ENCODE measurements at regions of chr16 and their contacts with region 1.

Region 1: DNA sequence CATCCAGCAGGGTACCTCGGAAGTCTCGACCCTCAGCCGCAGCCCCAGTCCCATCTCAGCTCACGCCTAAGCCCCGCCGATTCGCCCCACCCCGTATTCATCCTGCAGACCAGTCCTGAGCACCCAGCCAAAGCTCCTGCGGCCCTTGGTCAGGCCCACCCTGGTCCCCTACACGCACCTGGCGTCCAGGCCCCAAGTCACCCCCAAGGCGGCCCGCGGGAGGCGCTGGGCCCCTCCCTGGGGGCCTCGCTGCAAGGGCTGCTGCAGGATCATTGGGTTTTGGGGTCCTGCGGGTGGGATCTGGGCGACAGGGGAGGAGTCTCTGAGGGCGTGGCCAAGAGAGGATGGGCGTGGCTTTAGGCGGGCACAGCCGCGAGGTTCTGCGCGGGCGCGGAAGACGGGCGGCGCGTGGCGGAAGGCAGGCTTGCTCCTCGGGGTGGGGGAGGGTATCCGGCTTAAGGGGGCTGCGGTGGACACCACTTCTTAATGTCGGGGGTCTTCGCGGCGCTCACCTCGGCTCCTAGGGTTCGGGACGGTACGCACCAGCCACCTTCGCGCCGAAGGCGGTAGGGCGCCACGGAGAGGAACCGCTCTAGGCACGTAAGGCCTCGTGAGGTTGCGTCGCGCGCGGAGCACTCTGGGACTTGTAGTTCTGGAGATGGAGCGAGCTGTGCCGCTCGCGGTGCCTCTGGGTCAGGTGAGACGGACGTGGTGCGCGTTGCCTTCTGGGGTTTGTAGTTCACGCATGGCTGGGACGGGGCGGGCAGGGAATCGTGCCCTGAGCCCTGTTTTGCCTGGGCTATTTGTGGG is at the starts of genes HCFC1R1 and THOC6:
- DNase-seq: peak; percentile 91
- H3K4me3 ChIP-seq: peak within 1 kb of the TSS; percentile 94
- H3K27ac ChIP-seq: peak within 1 kb of the TSS; percentile 99
- H3K27me3 ChIP-seq: peaks cover 2% of the 10 kb centered on the region
- CTCF ChIP-seq: no peak
- polyA plus RNA-seq, gene HCFC1R1: 51.6 and 73.4 TPM in 2 replicates
- polyA plus RNA-seq, gene THOC6: 14.5 and 16.7 TPM in 2 replicates

Region 2: GRCh38 chr16:3046506-3047386 is 22.9 kb after region 1 on chr16 and contains the start of gene MMP25:
- CTCF ChIA-PET with region 1: interaction called, 12 read pairs
- POLR2A ChIA-PET with region 1: interaction called, 4 read pairs
- DNase-seq: no peak
- H3K4me3 ChIP-seq: peak within 1 kb of the TSS; percentile 50
- H3K27ac ChIP-seq: no peak within 1 kb of the TSS
- H3K27me3 ChIP-seq: peaks cover 62% of the 10 kb centered on the region
- CTCF ChIP-seq: no peak
- polyA plus RNA-seq, gene MMP25: not detected in 2 replicates

Region 3: GRCh38 chr16:3099732-3100499 is 76.0 kb after region 1 on chr16:
- CTCF ChIA-PET with region 1: no interaction called
- POLR2A ChIA-PET with region 1: no interaction called
- DNase-seq: peak; percentile 61
- H3K4me3 ChIP-seq: peak overlapping the region; percentile 41
- H3K27ac ChIP-seq: peak overlapping the region; percentile 11
- H3K27me3 ChIP-seq: peaks cover 28% of the 10 kb centered on the region
- CTCF ChIP-seq: no peak

Measured in AG04450 (cell line).